ENCODE measurements at regions of chr2 and their contacts with region 1.

Region 1: DNA sequence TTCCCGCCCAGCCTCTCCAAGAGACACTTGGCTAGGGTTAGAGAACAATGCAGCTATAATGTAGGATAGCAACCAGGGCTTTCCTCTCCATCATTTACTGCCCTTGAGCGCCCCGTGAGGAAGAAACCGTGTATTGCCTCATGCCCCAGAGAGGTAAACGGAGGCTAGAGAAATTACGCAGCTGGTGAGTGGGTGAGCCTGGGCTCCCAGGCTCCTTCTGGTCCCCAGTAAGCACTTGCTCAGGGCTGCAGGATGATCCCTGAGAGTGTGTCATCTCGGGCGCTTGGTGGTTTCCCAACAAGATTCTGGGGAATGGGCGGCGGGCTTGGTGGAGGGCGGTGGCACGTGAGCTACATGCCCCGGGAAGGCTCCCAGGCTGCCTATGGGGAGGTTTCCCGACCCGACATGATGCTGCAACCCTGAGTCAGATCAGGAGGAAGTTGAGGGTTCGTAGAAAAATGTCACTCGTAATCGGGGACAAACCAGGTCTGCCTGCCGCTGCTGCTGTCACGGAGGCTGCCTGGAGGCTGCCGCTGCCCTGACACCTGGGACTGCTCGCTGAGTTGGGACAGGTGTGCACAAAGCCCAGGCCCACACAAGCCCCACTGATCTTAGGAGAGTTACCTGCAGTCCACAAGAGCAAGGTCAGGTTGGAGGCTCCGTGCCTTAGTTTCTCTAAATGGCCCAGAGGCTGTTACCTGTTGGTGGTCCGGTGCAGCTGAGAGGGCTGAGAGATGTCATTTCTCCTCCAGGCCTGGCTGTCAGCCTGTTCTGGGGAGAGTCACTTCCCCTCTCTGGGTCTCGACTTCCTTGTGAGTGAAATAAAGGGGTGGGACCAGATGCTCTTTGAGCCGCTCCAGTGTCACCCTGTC is at the start of gene GPR55:
- DNase-seq: peak; percentile 90
- ATAC-seq: peak; percentile 69
- H3K4me3 Mint-ChIP-seq: peak within 1 kb of the TSS; percentile 76
- H3K27ac Mint-ChIP-seq: peak within 1 kb of the TSS; percentile 95
- H3K4me1 Mint-ChIP-seq: peaks cover 66% of the 10 kb centered on the region
- H3K27me3 Mint-ChIP-seq: peaks cover 4% of the 10 kb centered on the region
- total RNA-seq, gene GPR55: 3.6 to 4.0 TPM

Region 2: GRCh38 chr2:230864598-230865306 is 60.0 kb before region 1 on chr2 and contains the start of gene ITM2C:
- CTCF ChIA-PET with region 1: interaction called, 4 read pairs
- POLR2A ChIA-PET with region 1: interaction called, 3 read pairs
- intact Hi-C with region 1: loop called in 1 of 2 experiments (anchors 2 kb)
- DNase-seq: peak; percentile 89
- ATAC-seq: peak; percentile 86
- H3K4me3 Mint-ChIP-seq: peak within 1 kb of the TSS; percentile 84
- H3K27ac Mint-ChIP-seq: peak within 1 kb of the TSS; percentile 82
- H3K4me1 Mint-ChIP-seq: peaks cover 50% of the 10 kb centered on the region
- H3K27me3 Mint-ChIP-seq: peaks cover 5% of the 10 kb centered on the region
- total RNA-seq, gene ITM2C: 29.6 to 32.9 TPM

Region 3: GRCh38 chr2:230913406-230914143 is 11.1 kb before region 1 on chr2:
- CTCF ChIA-PET with region 1: interaction called, 14 read pairs
- POLR2A ChIA-PET with region 1: no interaction called
- intact Hi-C with region 1: no loop called
- DNase-seq: peak; percentile 50
- ATAC-seq: no peak
- H3K4me3 Mint-ChIP-seq: no peak overlapping the region
- H3K27ac Mint-ChIP-seq: no peak overlapping the region
- H3K4me1 Mint-ChIP-seq: peaks cover 60% of the 10 kb centered on the region
- H3K27me3 Mint-ChIP-seq: peaks cover 5% of the 10 kb centered on the region

Region 4: GRCh38 chr2:230942920-230943896 is 18.5 kb after region 1 on chr2:
- CTCF ChIA-PET with region 1: interaction called, 5 read pairs
- POLR2A ChIA-PET with region 1: interaction called, 4 read pairs
- intact Hi-C with region 1: loop called (anchors 1 kb)
- DNase-seq: peak; percentile 78
- ATAC-seq: peak; percentile 78
- H3K4me3 Mint-ChIP-seq: peak overlapping the region; percentile 61
- H3K27ac Mint-ChIP-seq: peak overlapping the region; percentile 75
- H3K4me1 Mint-ChIP-seq: peaks cover 27% of the 10 kb centered on the region
- H3K27me3 Mint-ChIP-seq: peaks cover 4% of the 10 kb centered on the region

Region 5: GRCh38 chr2:230956827-230957755 is 32.4 kb after region 1 on chr2:
- CTCF ChIA-PET with region 1: interaction called, 7 read pairs
- POLR2A ChIA-PET with region 1: no interaction called
- intact Hi-C with region 1: loop called (anchors 1 to 5 kb)
- DNase-seq: peak; percentile 64
- ATAC-seq: peak; percentile 81
- H3K4me3 Mint-ChIP-seq: peak overlapping the region; percentile 79
- H3K27ac Mint-ChIP-seq: peak overlapping the region; percentile 95
- H3K4me1 Mint-ChIP-seq: peaks cover 49% of the 10 kb centered on the region
- H3K27me3 Mint-ChIP-seq: peaks cover 47% of the 10 kb centered on the region

Region 6: DNA sequence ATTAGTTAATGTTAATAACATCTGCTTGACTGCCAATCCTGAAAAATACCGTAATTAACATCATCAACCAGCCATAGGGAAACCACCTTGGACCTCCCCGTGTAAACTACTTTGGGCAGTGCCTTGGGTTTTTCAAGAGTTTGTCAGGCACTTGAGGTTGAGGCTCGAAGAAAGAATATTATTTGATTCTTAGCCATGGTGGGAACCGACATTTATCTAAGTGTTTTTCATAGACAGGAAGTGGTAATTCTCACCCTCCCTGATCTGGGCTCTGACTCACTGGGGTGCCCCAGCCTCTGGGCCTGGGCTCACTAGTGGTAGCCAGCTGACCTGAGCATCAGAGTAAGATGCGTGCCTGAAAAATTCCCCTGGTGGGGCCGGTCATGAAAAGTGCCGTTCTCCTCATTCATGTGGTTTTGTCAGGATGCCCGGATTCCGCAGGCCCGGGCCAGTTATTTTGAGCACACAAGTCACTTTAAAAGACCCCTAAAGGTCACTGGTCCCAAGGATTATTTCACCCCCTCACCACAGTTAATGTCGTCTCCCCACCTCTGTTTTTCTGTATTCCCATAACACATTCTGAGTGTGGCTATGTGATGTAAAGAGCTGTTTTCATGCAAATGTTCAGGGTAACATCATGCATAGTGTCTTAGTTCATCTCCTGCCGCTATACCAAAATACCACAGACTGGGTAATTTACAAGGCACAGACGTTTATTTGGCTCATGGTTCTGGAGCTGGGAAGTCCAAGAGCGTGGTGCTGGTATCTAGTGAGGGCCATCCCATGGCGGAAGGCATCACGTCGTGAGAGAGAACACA is 49.6 kb after region 1 on chr2:
- CTCF ChIA-PET with region 1: interaction called, 9 read pairs
- POLR2A ChIA-PET with region 1: no interaction called
- intact Hi-C with region 1: loop called (anchors 1 kb)
- DNase-seq: peak; percentile 86
- ATAC-seq: peak; percentile 92
- H3K4me3 Mint-ChIP-seq: peak overlapping the region; percentile 26
- H3K27ac Mint-ChIP-seq: peak overlapping the region; percentile 91
- H3K4me1 Mint-ChIP-seq: peaks cover 48% of the 10 kb centered on the region
- H3K27me3 Mint-ChIP-seq: peaks cover 2% of the 10 kb centered on the region

Region 7: GRCh38 chr2:232487385-232488096 is 1562.8 kb after region 1 on chr2 and contains the start of gene ECEL1:
- CTCF ChIA-PET with region 1: no interaction called
- POLR2A ChIA-PET with region 1: no interaction called
- intact Hi-C with region 1: no loop called
- DNase-seq: peak; percentile 34
- ATAC-seq: peak; percentile 25
- H3K4me3 Mint-ChIP-seq: no peak within 1 kb of the TSS
- H3K27ac Mint-ChIP-seq: no peak within 1 kb of the TSS
- H3K4me1 Mint-ChIP-seq: peaks cover 3% of the 10 kb centered on the region
- H3K27me3 Mint-ChIP-seq: peaks cover 31% of the 10 kb centered on the region
- total RNA-seq, gene ECEL1: 0.19 to 0.23 TPM